GM12878 (cell line): ENCODE measurements at regions of chr16 and their contacts with region 1.

Region 1: DNA sequence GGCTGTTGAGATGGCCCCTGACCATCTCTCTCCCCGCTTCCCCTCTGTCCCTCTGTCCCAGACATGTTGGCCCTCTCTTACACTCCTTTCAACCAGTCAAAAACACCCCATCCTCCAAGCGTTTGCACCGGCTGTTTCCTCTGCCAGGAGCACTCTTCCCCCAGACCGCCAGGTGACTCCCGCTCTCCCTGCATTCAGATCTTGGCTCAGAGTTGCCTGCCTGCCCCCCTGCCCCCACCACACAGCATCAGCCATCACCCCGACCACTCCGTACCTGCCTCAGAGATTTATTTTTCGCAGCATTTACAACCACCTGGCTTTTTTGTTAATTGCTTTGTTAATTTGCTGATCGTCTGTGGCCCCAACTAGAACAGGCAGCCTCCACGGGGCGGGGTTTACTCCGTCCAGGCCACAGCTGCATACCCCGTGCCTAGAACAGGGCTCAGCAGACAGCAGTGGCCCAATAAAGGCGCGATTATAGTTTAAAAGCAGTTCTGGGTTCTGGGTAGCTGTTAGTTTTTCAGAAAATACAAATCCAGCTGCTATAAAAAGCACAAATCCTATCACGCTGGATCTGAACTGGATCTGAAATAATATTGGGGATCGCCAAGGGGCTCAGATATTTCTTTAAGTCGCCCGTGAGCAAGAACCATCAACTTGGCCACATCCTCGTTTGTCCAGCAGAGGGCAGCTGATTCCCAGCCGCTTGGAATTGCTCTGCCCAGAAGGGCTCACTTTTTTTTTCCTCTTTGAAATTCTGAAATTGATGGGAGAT is 173.6 kb downstream of the IRF8 start:
- DNase-seq: no peak
- ATAC-seq: peak; percentile 83
- H3K4me3 ChIP-seq: no peak overlapping the region
- H3K27ac ChIP-seq: no peak overlapping the region
- H3K4me1 ChIP-seq: no peaks in the 10 kb centered on the region
- H3K27me3 ChIP-seq: no peaks in the 10 kb centered on the region; a peak in 2 of 4 replicates
- CTCF ChIP-seq: peak; percentile 73 to 85 (median 78)
- EP300 ChIP-seq: no peak
- POLR2A ChIP-seq: no peak
- RAD21 ChIP-seq: peak; percentile 67

Region 2: DNA sequence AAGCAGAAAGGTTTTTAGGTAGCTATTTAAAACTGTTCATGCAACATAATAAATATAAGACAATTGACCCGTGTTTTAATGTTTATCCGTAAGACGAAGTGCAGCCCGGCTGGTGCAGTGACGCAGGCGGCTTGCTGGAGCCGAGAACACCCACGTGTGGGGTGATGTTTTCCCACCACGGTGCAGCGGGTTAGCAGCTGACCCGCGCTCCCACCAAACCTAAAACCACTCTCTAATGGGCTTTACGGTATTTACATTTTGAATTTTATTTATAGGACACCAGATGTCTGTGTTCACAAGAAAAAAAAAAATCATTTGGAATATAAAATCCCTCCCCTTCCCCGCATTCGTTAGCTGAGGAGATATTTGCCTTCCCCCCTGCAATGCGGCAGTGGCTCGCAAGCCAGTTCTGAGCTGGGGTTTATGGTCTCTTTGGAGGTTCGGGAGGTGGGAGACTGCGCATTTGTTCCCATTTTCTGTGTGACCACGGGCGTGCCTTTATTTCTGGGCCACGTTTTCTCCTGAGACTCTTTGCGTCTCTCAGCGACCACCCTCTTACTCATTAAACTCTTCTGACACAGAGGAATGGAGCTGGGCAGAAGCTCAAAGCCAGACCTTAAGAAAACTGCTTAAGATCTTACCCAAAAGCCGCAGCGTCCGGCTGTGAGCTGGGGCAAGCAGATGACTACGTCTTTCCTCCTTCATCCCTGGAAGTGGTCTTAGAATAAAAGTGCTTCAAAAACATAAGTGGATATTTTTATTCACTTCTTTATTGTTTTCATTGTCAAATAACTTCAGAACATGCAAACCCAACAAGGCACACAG is 127.6 kb after region 1 on chr16:
- CTCF ChIA-PET with region 1: no interaction called
- POLR2A ChIA-PET with region 1: no interaction called
- RAD21 ChIA-PET with region 1: no interaction called
- SMC1A ChIA-PET with region 1: interaction called, 3 read pairs
- in situ Hi-C with region 1: no loop called
- intact Hi-C with region 1: loop called (anchors 10 kb)
- DNase-seq: no peak
- ATAC-seq: no peak
- H3K4me3 ChIP-seq: no peak overlapping the region
- H3K27ac ChIP-seq: no peak overlapping the region
- H3K4me1 ChIP-seq: no peaks in the 10 kb centered on the region
- H3K27me3 ChIP-seq: peaks cover 11 to 18% of the 10 kb centered on the region in 2 experiments
- CTCF ChIP-seq: no peak
- EP300 ChIP-seq: no peak
- POLR2A ChIP-seq: no peak
- RAD21 ChIP-seq: no peak

Region 3: GRCh38 chr16:86285938-86286921 is 213.7 kb after region 1 on chr16:
- CTCF ChIA-PET with region 1: interaction called, 4 read pairs
- POLR2A ChIA-PET with region 1: no interaction called
- RAD21 ChIA-PET with region 1: no interaction called
- SMC1A ChIA-PET with region 1: no interaction called
- in situ Hi-C with region 1: no loop called
- intact Hi-C with region 1: loop called (anchors 10 kb)
- DNase-seq: no peak
- ATAC-seq: no peak
- H3K4me3 ChIP-seq: no peak overlapping the region
- H3K27ac ChIP-seq: no peak overlapping the region
- H3K4me1 ChIP-seq: no peaks in the 10 kb centered on the region
- H3K27me3 ChIP-seq: peaks cover 7 to 9% of the 10 kb centered on the region in 2 experiments
- CTCF ChIP-seq: no peak
- EP300 ChIP-seq: no peak
- POLR2A ChIP-seq: no peak
- RAD21 ChIP-seq: no peak

Region 4: GRCh38 chr16:86519649-86520316 is 447.3 kb after region 1 on chr16:
- CTCF ChIA-PET with region 1: interaction called, 37 read pairs
- POLR2A ChIA-PET with region 1: no interaction called
- RAD21 ChIA-PET with region 1: interaction called, 10 read pairs
- SMC1A ChIA-PET with region 1: interaction called, 11 read pairs
- in situ Hi-C with region 1: loop called (anchors 5 kb)
- intact Hi-C with region 1: loop called (anchors 1 kb)
- DNase-seq: no peak
- ATAC-seq: peak; percentile 76
- H3K4me3 ChIP-seq: no peak overlapping the region
- H3K27ac ChIP-seq: no peak overlapping the region
- H3K4me1 ChIP-seq: no peaks in the 10 kb centered on the region
- H3K27me3 ChIP-seq: peaks cover 5 to 9% of the 10 kb centered on the region in 2 experiments
- CTCF ChIP-seq: peak; percentile 86 to 92 (median 87)
- EP300 ChIP-seq: no peak
- POLR2A ChIP-seq: no peak
- RAD21 ChIP-seq: peak; percentile 79